B cell (primary cell): ENCODE measurements at regions of chr14 and their contacts with region 1.

Region 1: GRCh38 chr14:77616454-77617229 is at the start of gene SPTLC2:
- DNase-seq: peak; percentile 99
- ATAC-seq: peak; percentile 94
- H3K4me3 ChIP-seq: peak within 1 kb of the TSS; percentile 67 to 93 (median 76)
- H3K4me3 Mint-ChIP-seq: peak within 1 kb of the TSS; percentile 95
- H3K27ac ChIP-seq: peak within 1 kb of the TSS; percentile 75 to 78
- H3K27ac Mint-ChIP-seq: peak within 1 kb of the TSS; percentile 91
- H3K4me1 ChIP-seq: peaks cover 28% of the 10 kb centered on the region in 2 donors
- H3K4me1 Mint-ChIP-seq: peaks cover 40% of the 10 kb centered on the region
- H3K27me3 ChIP-seq: no peaks in the 10 kb centered on the region
- H3K27me3 Mint-ChIP-seq: no peaks in the 10 kb centered on the region
- CTCF ChIP-seq: no peak
- total RNA-seq, gene SPTLC2: 41.4 and 52.2 TPM in 2 replicates

Region 2: DNA sequence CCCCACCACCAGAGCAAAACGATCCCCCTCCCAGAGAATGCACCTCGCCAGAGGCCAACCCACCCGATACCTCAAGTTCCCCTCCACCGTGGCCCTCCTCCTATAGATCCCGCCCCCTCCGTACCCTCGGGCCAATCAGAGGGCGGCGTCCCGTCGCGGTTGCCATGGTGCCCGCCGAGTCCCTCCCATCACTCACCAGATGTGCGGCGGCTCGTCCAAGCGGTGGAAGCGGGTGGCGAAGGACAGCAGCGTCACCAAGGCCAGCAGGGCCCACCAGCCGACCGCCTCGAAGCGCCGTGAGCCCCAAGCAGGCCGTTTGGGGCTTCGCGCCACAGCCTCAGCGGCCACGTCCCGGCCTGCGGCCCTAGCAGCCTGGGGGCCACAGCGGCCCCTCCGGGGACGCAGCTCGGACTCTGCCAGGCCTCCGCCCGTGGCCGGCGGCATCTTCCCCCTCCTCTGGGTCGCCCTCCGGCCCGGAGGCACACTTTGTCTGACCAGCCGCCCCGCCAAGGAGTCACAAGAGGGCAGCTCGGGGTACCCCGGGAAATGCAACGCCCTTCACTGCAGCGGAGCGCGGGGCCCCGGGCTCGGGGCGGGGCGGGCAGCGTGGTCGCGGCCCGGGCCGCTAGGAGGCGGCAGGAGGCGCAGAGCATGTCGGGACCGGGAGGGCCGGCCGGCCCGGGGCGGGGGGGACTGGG is 296.3 kb before region 1 on chr14 and contains the start of gene POMT2:
- CTCF ChIA-PET with region 1: no interaction called
- POLR2A ChIA-PET with region 1: no interaction called
- intact Hi-C with region 1: loop called (anchors 2 kb)
- DNase-seq: peak; percentile 96
- ATAC-seq: peak; percentile 56
- H3K4me3 ChIP-seq: peak within 1 kb of the TSS; percentile 59 to 99 (median 93)
- H3K4me3 Mint-ChIP-seq: peak within 1 kb of the TSS; percentile 100
- H3K27ac ChIP-seq: peak within 1 kb of the TSS; percentile 89 to 92
- H3K27ac Mint-ChIP-seq: peak within 1 kb of the TSS; percentile 100
- H3K4me1 ChIP-seq: peaks cover 10 to 16% of the 10 kb centered on the region in 2 donors
- H3K4me1 Mint-ChIP-seq: peaks cover 18% of the 10 kb centered on the region
- H3K27me3 ChIP-seq: no peaks in the 10 kb centered on the region
- H3K27me3 Mint-ChIP-seq: no peaks in the 10 kb centered on the region
- CTCF ChIP-seq: peak; percentile 43
- total RNA-seq, gene POMT2: 36.6 and 44.1 TPM in 2 replicates

Region 3: DNA sequence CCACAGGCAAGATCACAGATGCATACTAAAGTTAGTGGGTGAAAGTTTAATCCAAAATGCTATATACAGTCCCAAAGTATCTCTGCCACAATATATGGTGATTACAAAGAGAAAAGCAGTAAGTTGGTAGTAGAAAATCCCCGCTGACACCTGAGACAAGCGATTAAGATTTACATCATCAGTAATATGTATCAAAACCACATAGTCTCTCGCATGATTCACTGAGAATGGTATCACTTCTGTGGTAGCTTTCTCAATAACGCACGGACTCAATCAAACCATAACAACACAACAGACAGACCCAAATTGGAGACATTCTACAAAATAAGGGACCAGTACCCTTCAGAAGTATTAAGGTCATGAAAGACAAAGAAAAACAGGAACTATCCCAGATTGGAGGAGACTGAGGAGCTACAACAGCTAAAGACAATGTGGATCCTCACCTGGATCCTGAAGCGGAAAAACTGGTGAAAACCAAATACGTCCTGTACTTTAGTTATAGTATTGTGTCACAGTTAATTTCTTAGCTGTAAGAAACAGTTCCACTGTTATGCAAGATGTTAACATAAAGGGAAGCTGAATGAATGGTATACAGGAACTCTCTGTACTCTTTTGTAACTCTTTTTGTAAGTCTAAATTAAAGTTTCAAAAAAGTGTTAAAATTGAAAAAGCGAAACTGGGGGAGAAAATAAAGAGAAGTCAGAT is 51.2 kb before region 1 on chr14:
- CTCF ChIA-PET with region 1: interaction called, 3 read pairs
- POLR2A ChIA-PET with region 1: no interaction called
- intact Hi-C with region 1: loop called (anchors 10 kb)
- DNase-seq: peak; percentile 36
- ATAC-seq: no peak
- H3K4me3 ChIP-seq: no peak overlapping the region
- H3K4me3 Mint-ChIP-seq: no peak overlapping the region
- H3K27ac ChIP-seq: peak overlapping the region in 1 of 2 donors; percentile 37
- H3K27ac Mint-ChIP-seq: peak overlapping the region; percentile 33
- H3K4me1 ChIP-seq: no peaks in the 10 kb centered on the region
- H3K4me1 Mint-ChIP-seq: peaks cover 3% of the 10 kb centered on the region
- H3K27me3 ChIP-seq: no peaks in the 10 kb centered on the region
- H3K27me3 Mint-ChIP-seq: no peaks in the 10 kb centered on the region
- CTCF ChIP-seq: no peak

Region 4: GRCh38 chr14:77630111-77630510 is 13.5 kb after region 1 on chr14:
- CTCF ChIA-PET with region 1: no interaction called
- POLR2A ChIA-PET with region 1: no interaction called
- intact Hi-C with region 1: no loop called
- DNase-seq: no peak
- ATAC-seq: no peak
- H3K4me3 ChIP-seq: no peak overlapping the region
- H3K4me3 Mint-ChIP-seq: no peak overlapping the region
- H3K27ac ChIP-seq: no peak overlapping the region
- H3K27ac Mint-ChIP-seq: no peak overlapping the region
- H3K4me1 ChIP-seq: no peaks in the 10 kb centered on the region
- H3K4me1 Mint-ChIP-seq: no peaks in the 10 kb centered on the region
- H3K27me3 ChIP-seq: no peaks in the 10 kb centered on the region
- H3K27me3 Mint-ChIP-seq: peaks cover 3% of the 10 kb centered on the region
- CTCF ChIP-seq: no peak

Region 5: GRCh38 chr14:77641534-77642341 is 25.1 kb after region 1 on chr14:
- CTCF ChIA-PET with region 1: interaction called, 5 read pairs
- POLR2A ChIA-PET with region 1: no interaction called
- intact Hi-C with region 1: loop called (anchors 1 kb)
- DNase-seq: peak; percentile 72
- ATAC-seq: peak; percentile 70
- H3K4me3 ChIP-seq: peak overlapping the region; percentile 41 to 87 (median 75)
- H3K4me3 Mint-ChIP-seq: peak overlapping the region; percentile 96
- H3K27ac ChIP-seq: peak overlapping the region; percentile 73 to 81
- H3K27ac Mint-ChIP-seq: peak overlapping the region; percentile 95
- H3K4me1 ChIP-seq: peaks cover 7 to 17% of the 10 kb centered on the region in 2 donors
- H3K4me1 Mint-ChIP-seq: peaks cover 16% of the 10 kb centered on the region
- H3K27me3 ChIP-seq: no peaks in the 10 kb centered on the region
- H3K27me3 Mint-ChIP-seq: no peaks in the 10 kb centered on the region
- CTCF ChIP-seq: no peak

Region 6: DNA sequence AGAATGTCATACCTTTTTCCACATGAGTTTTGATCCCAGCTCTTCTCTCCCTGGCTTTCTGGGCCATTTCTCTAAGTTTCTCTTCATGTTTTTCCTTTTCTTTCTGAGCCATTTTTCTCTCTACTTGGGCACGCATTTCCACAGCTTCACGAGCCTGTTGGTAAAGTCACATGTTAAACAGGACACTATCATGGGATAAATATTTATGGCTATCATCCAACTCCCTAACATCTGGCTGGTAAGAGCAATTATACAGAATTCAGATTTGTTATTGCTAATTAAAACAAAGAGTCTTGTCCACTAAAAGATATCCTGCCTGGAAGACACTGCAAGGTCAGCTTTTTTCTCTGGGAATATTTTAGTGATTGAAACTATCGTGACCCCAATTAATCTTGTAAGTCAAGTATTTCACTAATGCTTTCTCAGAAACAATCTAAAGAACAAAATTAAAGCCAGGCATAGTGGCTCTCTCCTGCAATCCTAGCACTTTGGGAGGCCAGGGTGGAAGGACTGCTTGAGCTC is 114.4 kb after region 1 on chr14:
- CTCF ChIA-PET with region 1: no interaction called
- POLR2A ChIA-PET with region 1: no interaction called
- intact Hi-C with region 1: no loop called
- DNase-seq: no peak
- ATAC-seq: no peak
- H3K4me3 ChIP-seq: no peak overlapping the region
- H3K4me3 Mint-ChIP-seq: no peak overlapping the region
- H3K27ac ChIP-seq: no peak overlapping the region
- H3K27ac Mint-ChIP-seq: no peak overlapping the region
- H3K4me1 ChIP-seq: no peaks in the 10 kb centered on the region
- H3K4me1 Mint-ChIP-seq: no peaks in the 10 kb centered on the region
- H3K27me3 ChIP-seq: no peaks in the 10 kb centered on the region
- H3K27me3 Mint-ChIP-seq: no peaks in the 10 kb centered on the region
- CTCF ChIP-seq: no peak

Region 7: GRCh38 chr14:77760381-77761246 is 144.0 kb after region 1 on chr14 and contains the start of gene SNW1:
- CTCF ChIA-PET with region 1: no interaction called
- POLR2A ChIA-PET with region 1: interaction called, 3 read pairs
- intact Hi-C with region 1: loop called (anchors 1 kb)
- DNase-seq: peak; percentile 95
- ATAC-seq: peak; percentile 94
- H3K4me3 ChIP-seq: peak within 1 kb of the TSS; percentile 82 to 98 (median 92)
- H3K4me3 Mint-ChIP-seq: peak within 1 kb of the TSS; percentile 97
- H3K27ac ChIP-seq: peak within 1 kb of the TSS; percentile 97
- H3K27ac Mint-ChIP-seq: peak within 1 kb of the TSS; percentile 97
- H3K4me1 ChIP-seq: peaks cover 23 to 24% of the 10 kb centered on the region in 2 donors
- H3K4me1 Mint-ChIP-seq: peaks cover 36% of the 10 kb centered on the region
- H3K27me3 ChIP-seq: no peaks in the 10 kb centered on the region
- H3K27me3 Mint-ChIP-seq: no peaks in the 10 kb centered on the region
- CTCF ChIP-seq: no peak
- total RNA-seq, gene SNW1: 86.4 and 99.3 TPM in 2 replicates

Region 8: DNA sequence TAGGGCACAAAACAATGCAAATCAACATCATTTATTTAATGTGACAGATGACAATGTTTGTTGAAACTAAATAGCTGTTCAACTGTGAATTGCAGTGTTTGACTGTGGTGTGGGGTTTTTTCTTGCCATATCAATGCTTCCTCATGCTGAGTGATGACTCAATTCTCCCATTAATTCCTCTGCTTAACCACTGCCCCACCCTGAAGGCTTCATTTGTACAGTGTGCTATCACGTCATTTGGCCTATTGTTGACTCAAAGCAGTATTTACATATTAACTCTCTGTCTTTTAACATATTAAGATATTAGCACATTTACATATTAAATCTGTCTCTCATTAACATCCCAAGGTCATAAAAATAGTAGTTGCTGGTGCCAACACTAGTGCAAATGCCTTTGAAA is 388.7 kb after region 1 on chr14:
- CTCF ChIA-PET with region 1: no interaction called
- POLR2A ChIA-PET with region 1: no interaction called
- intact Hi-C with region 1: no loop called
- DNase-seq: no peak
- ATAC-seq: no peak
- H3K4me3 ChIP-seq: no peak overlapping the region
- H3K4me3 Mint-ChIP-seq: no peak overlapping the region
- H3K27ac ChIP-seq: no peak overlapping the region
- H3K27ac Mint-ChIP-seq: no peak overlapping the region
- H3K4me1 ChIP-seq: no peaks in the 10 kb centered on the region
- H3K4me1 Mint-ChIP-seq: no peaks in the 10 kb centered on the region
- H3K27me3 ChIP-seq: peaks cover 0 to 2% (median 0%) of the 10 kb centered on the region in 4 experiments
- H3K27me3 Mint-ChIP-seq: peaks cover 5% of the 10 kb centered on the region
- CTCF ChIP-seq: no peak